ENCODE measurements at regions of chr10 and their contacts with region 1.

Region 1: GRCh38 chr10:13099666-13100348 is at the start of gene OPTN:
- DNase-seq: peak; percentile 89
- H3K4me3 Mint-ChIP-seq: peak within 1 kb of the TSS; percentile 88
- H3K27ac Mint-ChIP-seq: peak within 1 kb of the TSS; percentile 81
- H3K4me1 Mint-ChIP-seq: peaks cover 26% of the 10 kb centered on the region
- H3K27me3 Mint-ChIP-seq: no peaks in the 10 kb centered on the region
- total RNA-seq, gene OPTN: 39.7 to 43.8 TPM

Region 2: GRCh38 chr10:12214763-12215218 is 885.0 kb before region 1 on chr10:
- CTCF ChIA-PET with region 1: interaction called, 3 read pairs
- intact Hi-C with region 1: loop called (anchors 10 kb)
- DNase-seq: peak; percentile 64
- H3K4me3 Mint-ChIP-seq: peak overlapping the region; percentile 30
- H3K27ac Mint-ChIP-seq: peak overlapping the region; percentile 74
- H3K4me1 Mint-ChIP-seq: peaks cover 10% of the 10 kb centered on the region
- H3K27me3 Mint-ChIP-seq: no peaks in the 10 kb centered on the region

Region 3: GRCh38 chr10:12782537-12782936 is 317.3 kb before region 1 on chr10:
- CTCF ChIA-PET with region 1: interaction called, 5 read pairs
- intact Hi-C with region 1: loop called (anchors 1 kb)
- DNase-seq: peak; percentile 62
- H3K4me3 Mint-ChIP-seq: no peak overlapping the region
- H3K27ac Mint-ChIP-seq: no peak overlapping the region
- H3K4me1 Mint-ChIP-seq: peaks cover 8% of the 10 kb centered on the region
- H3K27me3 Mint-ChIP-seq: no peaks in the 10 kb centered on the region

Region 4: GRCh38 chr10:13074561-13075451 is 25.0 kb before region 1 on chr10:
- CTCF ChIA-PET with region 1: interaction called, 3 read pairs
- intact Hi-C with region 1: loop called (anchors 2 kb)
- DNase-seq: peak; percentile 79
- H3K4me3 Mint-ChIP-seq: no peak overlapping the region
- H3K27ac Mint-ChIP-seq: no peak overlapping the region
- H3K4me1 Mint-ChIP-seq: no peaks in the 10 kb centered on the region
- H3K27me3 Mint-ChIP-seq: peaks cover 20% of the 10 kb centered on the region

Region 5: GRCh38 chr10:13160934-13161856 is 61.4 kb after region 1 on chr10 and contains the start of gene MCM10:
- CTCF ChIA-PET with region 1: interaction called, 3 read pairs
- intact Hi-C with region 1: loop called (anchors 1 kb)
- DNase-seq: peak; percentile 99
- H3K4me3 Mint-ChIP-seq: peak within 1 kb of the TSS; percentile 88
- H3K27ac Mint-ChIP-seq: peak within 1 kb of the TSS; percentile 63
- H3K4me1 Mint-ChIP-seq: peaks cover 27% of the 10 kb centered on the region
- H3K27me3 Mint-ChIP-seq: peaks cover 2% of the 10 kb centered on the region
- total RNA-seq, gene MCM10: 76.9 to 81.1 TPM

Region 6: DNA sequence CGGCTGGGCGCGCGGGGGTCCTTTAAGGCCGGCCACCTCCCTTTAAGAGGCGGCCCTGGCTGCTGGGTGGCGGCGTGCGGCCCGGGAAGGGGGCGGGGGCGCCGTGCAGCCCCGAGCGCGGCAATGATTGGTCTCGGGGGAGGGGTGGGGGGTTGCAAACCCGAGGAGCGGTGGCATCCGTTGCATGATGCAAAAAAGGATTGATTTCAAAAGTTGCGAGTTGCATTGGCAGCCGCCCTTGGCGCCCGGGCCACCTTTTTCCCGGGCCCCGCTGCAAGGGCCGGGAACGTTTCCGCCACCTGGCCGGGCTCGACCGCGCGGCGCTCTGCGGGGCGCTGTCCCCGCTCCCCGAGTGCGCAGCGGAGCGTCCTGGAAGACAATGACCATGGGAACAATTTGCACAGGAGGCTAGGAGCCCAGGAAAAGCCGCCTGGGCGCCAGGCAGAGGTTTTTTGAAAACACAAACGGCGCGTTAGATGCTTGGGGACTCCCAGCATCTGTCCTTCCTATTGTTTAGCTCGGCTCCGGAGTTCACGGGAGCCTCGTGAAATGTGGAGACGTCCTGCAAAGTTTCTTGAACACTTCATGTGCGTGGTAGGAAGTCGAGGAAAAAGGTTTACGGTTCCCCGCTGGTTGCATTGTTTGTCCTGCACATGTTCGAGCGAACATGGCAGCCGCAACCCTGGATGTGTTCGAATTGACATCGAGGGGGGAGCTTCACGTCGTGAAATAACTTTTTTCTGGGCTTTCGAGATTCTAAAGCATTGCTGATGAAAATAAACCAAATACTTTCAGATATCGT is 248.6 kb after region 1 on chr10 and contains the start of gene SEPHS1:
- CTCF ChIA-PET with region 1: interaction called, 3 read pairs
- intact Hi-C with region 1: loop called (anchors 1 kb)
- DNase-seq: peak; percentile 91
- H3K4me3 Mint-ChIP-seq: peak within 1 kb of the TSS; percentile 88
- H3K27ac Mint-ChIP-seq: peak within 1 kb of the TSS; percentile 94
- H3K4me1 Mint-ChIP-seq: peaks cover 57% of the 10 kb centered on the region
- H3K27me3 Mint-ChIP-seq: no peaks in the 10 kb centered on the region
- total RNA-seq, gene SEPHS1: 75.6 to 79.6 TPM

Region 7: GRCh38 chr10:13365243-13365642 is 265.4 kb after region 1 on chr10:
- CTCF ChIA-PET with region 1: no interaction called
- intact Hi-C with region 1: no loop called
- DNase-seq: no peak
- H3K4me3 Mint-ChIP-seq: no peak overlapping the region
- H3K27ac Mint-ChIP-seq: no peak overlapping the region
- H3K4me1 Mint-ChIP-seq: no peaks in the 10 kb centered on the region
- H3K27me3 Mint-ChIP-seq: no peaks in the 10 kb centered on the region